Heart left ventricle (tissue), 16 donors: ENCODE measurements at regions of chr9 and their contacts with region 1.

Region 1: GRCh38 chr9:27292659-27293405 is 4.1 kb downstream of the EQTN start:
- DNase-seq: no peak
- ATAC-seq: no peak
- H3K4me3 ChIP-seq: no peak overlapping the region
- H3K27ac ChIP-seq: no peak overlapping the region
- H3K4me1 ChIP-seq: no peaks in the 10 kb centered on the region
- H3K27me3 ChIP-seq: no peaks in the 10 kb centered on the region
- CTCF ChIP-seq: no peak
- POLR2A ChIP-seq: no peak

Region 2: GRCh38 chr9:27227192-27227591 is 65.6 kb before region 1 on chr9:
- intact Hi-C with region 1: loop called in 1 of 10 experiments (anchors 10 kb)
- DNase-seq: no peak
- ATAC-seq: no peak
- H3K4me3 ChIP-seq: no peak overlapping the region
- H3K27ac ChIP-seq: no peak overlapping the region
- H3K4me1 ChIP-seq: no peaks in the 10 kb centered on the region
- H3K27me3 ChIP-seq: no peaks in the 10 kb centered on the region
- CTCF ChIP-seq: no peak
- POLR2A ChIP-seq: no peak

Region 3: DNA sequence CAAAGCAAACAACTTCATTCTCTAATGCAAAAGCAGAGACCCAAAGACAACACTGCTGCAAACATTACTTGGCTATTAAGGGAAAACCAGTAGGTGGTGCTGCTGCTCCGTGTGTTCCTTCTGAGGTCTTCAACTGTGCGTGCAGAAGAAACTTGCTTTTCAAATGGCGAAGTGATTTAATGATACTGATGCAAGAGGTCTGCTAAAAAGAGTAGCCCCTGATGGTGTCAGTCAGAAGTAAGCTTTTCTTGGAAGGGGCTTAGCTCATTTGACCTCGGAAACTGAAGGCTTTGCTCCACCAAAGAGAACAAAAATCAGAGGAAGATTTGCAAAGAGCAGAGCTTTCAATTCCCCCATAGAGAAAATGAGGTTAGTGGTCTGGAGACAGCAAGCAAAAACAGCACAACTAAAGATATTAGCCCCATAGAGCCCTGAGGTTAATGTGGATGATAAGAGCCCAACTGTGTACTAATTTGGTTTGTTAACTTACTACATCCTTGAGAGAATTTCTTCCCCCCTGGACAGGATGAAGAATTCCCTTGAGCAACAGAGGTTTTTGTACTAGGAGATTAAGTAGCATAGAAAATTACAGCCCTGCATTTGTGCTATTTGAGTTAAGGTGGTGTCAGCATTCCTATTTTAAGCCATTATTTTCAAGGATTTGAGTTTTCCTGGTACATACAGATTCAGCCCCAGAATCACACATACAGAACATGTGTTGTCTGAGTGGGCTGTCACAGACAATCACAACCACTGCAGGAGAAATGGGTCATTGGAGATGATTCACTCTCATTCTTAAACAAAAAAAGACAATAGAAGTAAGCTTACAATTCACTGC is 433.6 kb after region 1 on chr9:
- intact Hi-C with region 1: no loop called
- DNase-seq: peak in 4 of 5 donors; percentile 19 to 45 (median 32)
- ATAC-seq: peak in 3 of 4 donors; percentile 57 to 75 (median 59)
- H3K4me3 ChIP-seq: no peak overlapping the region
- H3K27ac ChIP-seq: no peak overlapping the region
- H3K4me1 ChIP-seq: no peaks in the 10 kb centered on the region
- H3K27me3 ChIP-seq: peaks cover 0 to 3% (median 0%) of the 10 kb centered on the region in 9 donors
- CTCF ChIP-seq: peak; percentile 52 to 82 (median 66)
- POLR2A ChIP-seq: no peak